ENCODE measurements at regions of chr13 and their contacts with region 1.

Region 1: GRCh38 chr13:75482070-75482819 is at the start of gene TBC1D4:
- DNase-seq: peak; percentile 95
- H3K4me3 ChIP-seq: peak within 1 kb of the TSS; percentile 94
- H3K4me3 Mint-ChIP-seq: peak within 1 kb of the TSS; percentile 82
- H3K27ac Mint-ChIP-seq: peak within 1 kb of the TSS; percentile 78
- H3K4me1 ChIP-seq: peaks cover 40% of the 10 kb centered on the region
- H3K4me1 Mint-ChIP-seq: peaks cover 24% of the 10 kb centered on the region
- H3K27me3 ChIP-seq: no peaks in the 10 kb centered on the region
- H3K27me3 Mint-ChIP-seq: no peaks in the 10 kb centered on the region
- CTCF ChIP-seq: peak; percentile 75 to 96
- total RNA-seq, gene TBC1D4: 177 and 194 TPM in 2 replicates

Region 2: GRCh38 chr13:75365724-75366173 is 116.5 kb before region 1 on chr13:
- CTCF ChIA-PET with region 1: interaction called, 34 read pairs
- POLR2A ChIA-PET with region 1: no interaction called
- intact Hi-C with region 1: no loop called
- DNase-seq: no peak
- H3K4me3 ChIP-seq: no peak overlapping the region
- H3K4me3 Mint-ChIP-seq: no peak overlapping the region
- H3K27ac Mint-ChIP-seq: peak overlapping the region; percentile 26
- H3K4me1 ChIP-seq: peaks cover 84% of the 10 kb centered on the region
- H3K4me1 Mint-ChIP-seq: peaks cover 57% of the 10 kb centered on the region
- H3K27me3 ChIP-seq: no peaks in the 10 kb centered on the region; the same call in 1 of the 2 replicates
- H3K27me3 Mint-ChIP-seq: no peaks in the 10 kb centered on the region
- CTCF ChIP-seq: no peak

Region 3: GRCh38 chr13:75384879-75385707 is 97.2 kb before region 1 on chr13:
- CTCF ChIA-PET with region 1: interaction called, 3 read pairs
- POLR2A ChIA-PET with region 1: interaction called, 9 read pairs
- intact Hi-C with region 1: loop called (anchors 2 kb)
- DNase-seq: peak; percentile 70 to 77
- H3K4me3 ChIP-seq: peak overlapping the region; percentile 6
- H3K4me3 Mint-ChIP-seq: peak overlapping the region; percentile 67
- H3K27ac Mint-ChIP-seq: peak overlapping the region; percentile 93
- H3K4me1 ChIP-seq: peaks cover 76% of the 10 kb centered on the region
- H3K4me1 Mint-ChIP-seq: peaks cover 44% of the 10 kb centered on the region
- H3K27me3 ChIP-seq: no peaks in the 10 kb centered on the region
- H3K27me3 Mint-ChIP-seq: no peaks in the 10 kb centered on the region
- CTCF ChIP-seq: no peak

Region 4: DNA sequence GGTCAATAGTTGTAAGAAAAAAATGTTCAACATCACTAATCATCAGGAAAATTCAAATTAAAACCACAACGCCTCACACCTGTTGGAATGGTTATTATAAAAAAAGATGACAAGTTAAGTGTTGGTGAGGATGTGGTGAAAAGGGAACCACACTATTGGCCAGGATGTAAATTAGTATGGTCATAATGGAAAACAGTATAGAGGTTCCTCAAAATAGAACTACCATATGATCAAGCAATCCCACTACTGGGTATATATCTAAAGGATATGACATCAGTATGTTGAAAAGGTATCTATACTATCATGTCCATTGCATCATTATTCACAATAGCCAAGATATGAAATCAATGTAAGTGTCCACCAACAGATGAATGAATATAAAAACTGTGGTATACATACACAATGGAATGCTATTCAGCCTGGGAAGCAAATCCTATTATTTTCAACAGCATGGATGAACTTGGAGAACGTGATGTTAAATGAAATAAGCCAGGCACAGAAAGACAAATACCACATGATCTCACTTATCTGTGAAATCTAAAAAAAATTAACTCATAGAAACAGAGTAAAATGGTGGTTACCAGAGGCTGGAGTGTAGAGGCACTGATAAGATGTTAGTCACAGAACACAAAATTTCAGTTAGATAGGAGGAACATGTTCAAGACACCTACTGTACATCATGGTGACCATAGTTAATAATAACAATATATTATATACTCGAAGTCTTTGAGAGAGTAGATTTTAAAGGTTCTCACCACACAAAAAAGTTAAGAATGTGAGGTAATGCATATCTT is 56.8 kb before region 1 on chr13:
- CTCF ChIA-PET with region 1: no interaction called
- POLR2A ChIA-PET with region 1: no interaction called
- intact Hi-C with region 1: no loop called
- DNase-seq: no peak
- H3K4me3 ChIP-seq: no peak overlapping the region
- H3K4me3 Mint-ChIP-seq: no peak overlapping the region
- H3K27ac Mint-ChIP-seq: no peak overlapping the region
- H3K4me1 ChIP-seq: peaks cover 14% of the 10 kb centered on the region
- H3K4me1 Mint-ChIP-seq: peaks cover 18% of the 10 kb centered on the region
- H3K27me3 ChIP-seq: no peaks in the 10 kb centered on the region
- H3K27me3 Mint-ChIP-seq: no peaks in the 10 kb centered on the region
- CTCF ChIP-seq: no peak

Region 5: GRCh38 chr13:75549262-75550158 is 67.3 kb after region 1 on chr13 and contains the start of gene UCHL3:
- CTCF ChIA-PET with region 1: interaction called, 20 read pairs
- POLR2A ChIA-PET with region 1: no interaction called
- intact Hi-C with region 1: loop called (anchors 1 kb)
- DNase-seq: peak; percentile 97 to 99
- H3K4me3 ChIP-seq: peak within 1 kb of the TSS; percentile 85
- H3K4me3 Mint-ChIP-seq: peak within 1 kb of the TSS; percentile 91
- H3K27ac Mint-ChIP-seq: peak within 1 kb of the TSS; percentile 85
- H3K4me1 ChIP-seq: peaks cover 9% of the 10 kb centered on the region; the same call in 1 of the 2 replicates
- H3K4me1 Mint-ChIP-seq: peaks cover 38% of the 10 kb centered on the region
- H3K27me3 ChIP-seq: no peaks in the 10 kb centered on the region
- H3K27me3 Mint-ChIP-seq: no peaks in the 10 kb centered on the region
- CTCF ChIP-seq: peak; percentile 90 to 99
- total RNA-seq, gene UCHL3: 113 and 122 TPM in 2 replicates